ENCODE measurements at regions of chr1 and their contacts with region 1.

Region 1: DNA sequence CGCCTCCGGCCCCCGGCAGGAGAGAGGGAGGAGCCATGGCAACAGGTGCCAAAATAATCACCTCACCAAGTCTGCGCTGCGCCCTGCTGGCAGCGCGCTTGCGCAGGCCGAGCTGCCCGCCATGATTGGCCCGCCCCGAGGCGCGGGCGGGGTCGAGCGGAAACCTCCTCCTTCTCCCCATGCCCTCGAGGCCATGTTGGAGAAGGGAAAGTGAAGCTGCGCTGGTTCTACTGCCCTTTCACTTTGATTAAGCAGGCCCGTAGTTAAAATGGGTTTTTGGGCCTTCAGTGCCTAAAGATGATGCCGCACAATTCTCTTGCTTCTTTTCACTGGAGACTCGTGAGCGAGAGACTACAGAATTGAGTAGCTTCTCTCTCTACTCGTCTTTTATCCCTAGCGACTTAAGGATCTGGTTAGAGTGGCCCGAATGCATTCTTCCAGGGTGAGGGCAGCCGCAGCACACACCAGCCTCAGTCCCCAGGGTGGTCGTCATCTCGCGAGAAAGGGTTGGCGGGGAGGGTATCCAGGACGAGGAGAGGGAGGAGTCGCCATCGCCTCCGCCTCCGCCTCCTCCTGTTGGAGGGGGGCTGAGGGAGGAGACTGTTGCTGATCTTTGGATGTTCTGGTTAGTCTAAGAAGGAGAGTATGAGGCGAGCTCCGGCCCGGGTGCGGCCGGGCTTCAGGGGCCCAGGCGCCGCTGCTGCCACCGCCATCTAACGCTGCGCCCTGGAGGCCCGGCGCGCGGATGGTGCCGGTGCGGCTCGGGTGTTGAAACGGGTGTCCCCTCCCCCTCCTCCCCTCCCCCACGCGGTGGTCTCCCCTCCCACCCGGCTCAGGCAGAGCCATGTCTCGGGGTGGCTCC is at the start of gene DCAF6:
- DNase-seq: peak; percentile 92
- ATAC-seq: peak; percentile 79
- H3K4me3 Mint-ChIP-seq: peak within 1 kb of the TSS; percentile 88
- H3K27ac Mint-ChIP-seq: peak within 1 kb of the TSS; percentile 100
- H3K4me1 Mint-ChIP-seq: peaks cover 35% of the 10 kb centered on the region
- H3K27me3 Mint-ChIP-seq: no peaks in the 10 kb centered on the region
- CTCF ChIP-seq: no peak
- total RNA-seq, gene DCAF6: 23.1 and 32.9 TPM in 2 replicates

Region 2: GRCh38 chr1:166838766-166839599 is 1097.3 kb before region 1 on chr1 and contains the start of gene POGK:
- CTCF ChIA-PET with region 1: interaction called, 3 read pairs
- POLR2A ChIA-PET with region 1: interaction called, 4 read pairs
- intact Hi-C with region 1: loop called (anchors 1 kb)
- DNase-seq: peak; percentile 84
- ATAC-seq: peak; percentile 94
- H3K4me3 Mint-ChIP-seq: peak within 1 kb of the TSS; percentile 92
- H3K27ac Mint-ChIP-seq: peak within 1 kb of the TSS; percentile 96
- H3K4me1 Mint-ChIP-seq: peaks cover 29% of the 10 kb centered on the region
- H3K27me3 Mint-ChIP-seq: peaks cover 2% of the 10 kb centered on the region
- CTCF ChIP-seq: no peak
- total RNA-seq, gene POGK: 37.8 and 39.1 TPM in 2 replicates

Region 3: DNA sequence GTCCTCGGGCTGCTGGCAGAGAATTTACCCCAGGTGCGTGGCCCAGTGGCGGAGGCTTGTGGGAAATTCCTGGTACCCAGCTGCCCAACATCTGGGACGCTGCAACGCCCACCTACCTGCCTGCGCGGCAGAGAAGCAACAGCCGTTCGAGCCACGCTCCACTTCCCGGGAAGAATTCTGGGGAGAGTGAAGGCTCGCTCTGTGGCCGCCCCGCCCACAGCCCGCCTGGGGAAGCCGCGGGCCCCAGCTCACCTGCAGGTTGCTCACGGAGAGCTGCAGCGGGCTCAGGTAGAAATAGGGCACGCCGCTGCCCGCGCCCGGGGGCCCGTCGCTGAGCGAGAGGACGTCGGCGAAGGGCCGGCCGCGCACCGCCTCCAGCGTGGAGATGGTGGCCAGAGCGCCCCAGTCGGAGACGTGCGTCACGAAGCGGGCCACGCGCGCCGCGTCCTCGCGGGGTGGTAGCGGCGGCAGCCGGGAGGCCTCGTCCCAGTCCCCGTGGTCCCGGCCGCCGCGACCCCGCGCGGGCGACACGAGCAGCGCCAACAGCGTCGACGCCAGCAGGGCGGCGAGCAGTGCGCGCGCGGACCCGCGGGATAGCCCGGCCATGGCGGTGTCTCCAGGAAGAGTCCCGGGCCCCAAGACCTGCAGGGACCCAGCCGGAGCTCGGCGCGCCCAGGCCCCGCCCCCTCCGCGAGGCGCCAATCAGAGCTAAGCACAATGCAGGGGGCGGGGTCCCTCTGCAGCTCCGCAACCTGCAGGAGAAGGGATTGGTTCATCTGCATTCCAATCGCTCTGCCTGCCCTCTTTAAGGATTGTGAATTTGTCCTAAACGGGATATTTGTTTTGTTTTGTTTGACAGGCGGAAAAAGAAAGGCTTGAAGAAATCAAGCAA is 382.9 kb before region 1 on chr1 and contains the start of gene CREG1:
- CTCF ChIA-PET with region 1: no interaction called
- POLR2A ChIA-PET with region 1: no interaction called
- intact Hi-C with region 1: loop called (anchors 2 kb)
- DNase-seq: peak; percentile 84
- ATAC-seq: peak; percentile 99
- H3K4me3 Mint-ChIP-seq: peak within 1 kb of the TSS; percentile 86
- H3K27ac Mint-ChIP-seq: peak within 1 kb of the TSS; percentile 41
- H3K4me1 Mint-ChIP-seq: peaks cover 19% of the 10 kb centered on the region
- H3K27me3 Mint-ChIP-seq: no peaks in the 10 kb centered on the region
- CTCF ChIP-seq: no peak
- total RNA-seq, gene CREG1: 3.1 and 3.8 TPM in 2 replicates

Region 4: GRCh38 chr1:167803358-167804207 is 132.7 kb before region 1 on chr1:
- CTCF ChIA-PET with region 1: no interaction called
- POLR2A ChIA-PET with region 1: no interaction called
- intact Hi-C with region 1: loop called (anchors 2 kb)
- DNase-seq: peak; percentile 79
- ATAC-seq: peak; percentile 100
- H3K4me3 Mint-ChIP-seq: peak overlapping the region; percentile 48
- H3K27ac Mint-ChIP-seq: no peak overlapping the region
- H3K4me1 Mint-ChIP-seq: peaks cover 22% of the 10 kb centered on the region
- H3K27me3 Mint-ChIP-seq: no peaks in the 10 kb centered on the region
- CTCF ChIP-seq: peak; percentile 54

Region 5: DNA sequence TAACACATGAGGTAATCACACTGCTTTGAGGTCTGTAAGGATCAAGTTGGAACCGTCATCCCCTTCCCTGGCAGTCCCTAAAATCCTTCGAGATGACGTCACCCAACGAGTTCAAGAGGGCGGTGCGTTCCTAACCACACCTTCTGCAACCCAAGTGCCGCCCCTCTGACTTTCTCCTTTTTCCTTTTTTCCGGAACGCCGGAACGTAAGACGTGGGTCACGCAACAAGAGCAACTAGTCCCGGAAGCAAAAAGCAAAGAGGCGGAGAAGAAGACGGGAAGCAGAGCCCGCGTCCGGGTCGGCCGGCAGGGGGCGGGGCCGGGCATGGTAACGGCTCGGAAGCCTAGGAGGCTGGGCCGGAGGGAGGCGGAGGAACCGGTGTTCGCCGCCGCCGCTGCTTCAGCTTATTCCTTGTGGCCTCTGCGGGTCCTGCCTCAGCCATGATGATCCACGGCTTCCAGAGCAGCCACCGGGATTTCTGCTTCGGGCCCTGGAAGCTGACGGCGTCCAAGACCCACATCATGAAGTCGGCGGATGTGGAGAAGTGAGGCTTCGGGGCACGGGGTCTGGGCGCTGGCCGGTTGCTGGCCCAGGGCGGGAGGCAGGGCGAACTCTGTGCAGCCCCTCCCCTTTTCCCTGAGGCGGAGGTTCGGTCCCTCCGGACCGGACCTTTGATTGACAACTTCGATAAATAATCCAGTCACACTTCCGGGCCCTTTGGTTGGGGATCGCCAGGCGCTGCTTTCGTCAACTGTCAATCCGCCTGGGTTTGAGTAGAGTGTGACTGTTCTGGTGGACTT is 242.5 kb after region 1 on chr1 and contains the start of gene TIPRL:
- CTCF ChIA-PET with region 1: no interaction called
- POLR2A ChIA-PET with region 1: interaction called, 4 read pairs
- intact Hi-C with region 1: loop called (anchors 1 kb)
- DNase-seq: peak; percentile 92
- ATAC-seq: peak; percentile 88
- H3K4me3 Mint-ChIP-seq: no peak within 1 kb of the TSS
- H3K27ac Mint-ChIP-seq: no peak within 1 kb of the TSS
- H3K4me1 Mint-ChIP-seq: peaks cover 2% of the 10 kb centered on the region
- H3K27me3 Mint-ChIP-seq: peaks cover 8% of the 10 kb centered on the region
- CTCF ChIP-seq: no peak
- total RNA-seq, gene TIPRL: 25.5 and 29.8 TPM in 2 replicates

Region 6: GRCh38 chr1:168216171-168216570 is 279.9 kb after region 1 on chr1:
- CTCF ChIA-PET with region 1: no interaction called
- POLR2A ChIA-PET with region 1: no interaction called
- intact Hi-C with region 1: no loop called
- DNase-seq: no peak
- ATAC-seq: no peak
- H3K4me3 Mint-ChIP-seq: no peak overlapping the region
- H3K27ac Mint-ChIP-seq: no peak overlapping the region
- H3K4me1 Mint-ChIP-seq: no peaks in the 10 kb centered on the region
- H3K27me3 Mint-ChIP-seq: no peaks in the 10 kb centered on the region
- CTCF ChIP-seq: no peak

Region 7: GRCh38 chr1:168246506-168246905 is 310.2 kb after region 1 on chr1:
- CTCF ChIA-PET with region 1: no interaction called
- POLR2A ChIA-PET with region 1: no interaction called
- intact Hi-C with region 1: no loop called
- DNase-seq: no peak
- ATAC-seq: no peak
- H3K4me3 Mint-ChIP-seq: no peak overlapping the region
- H3K27ac Mint-ChIP-seq: no peak overlapping the region
- H3K4me1 Mint-ChIP-seq: peaks cover 11% of the 10 kb centered on the region
- H3K27me3 Mint-ChIP-seq: no peaks in the 10 kb centered on the region
- CTCF ChIP-seq: no peak

Region 8: DNA sequence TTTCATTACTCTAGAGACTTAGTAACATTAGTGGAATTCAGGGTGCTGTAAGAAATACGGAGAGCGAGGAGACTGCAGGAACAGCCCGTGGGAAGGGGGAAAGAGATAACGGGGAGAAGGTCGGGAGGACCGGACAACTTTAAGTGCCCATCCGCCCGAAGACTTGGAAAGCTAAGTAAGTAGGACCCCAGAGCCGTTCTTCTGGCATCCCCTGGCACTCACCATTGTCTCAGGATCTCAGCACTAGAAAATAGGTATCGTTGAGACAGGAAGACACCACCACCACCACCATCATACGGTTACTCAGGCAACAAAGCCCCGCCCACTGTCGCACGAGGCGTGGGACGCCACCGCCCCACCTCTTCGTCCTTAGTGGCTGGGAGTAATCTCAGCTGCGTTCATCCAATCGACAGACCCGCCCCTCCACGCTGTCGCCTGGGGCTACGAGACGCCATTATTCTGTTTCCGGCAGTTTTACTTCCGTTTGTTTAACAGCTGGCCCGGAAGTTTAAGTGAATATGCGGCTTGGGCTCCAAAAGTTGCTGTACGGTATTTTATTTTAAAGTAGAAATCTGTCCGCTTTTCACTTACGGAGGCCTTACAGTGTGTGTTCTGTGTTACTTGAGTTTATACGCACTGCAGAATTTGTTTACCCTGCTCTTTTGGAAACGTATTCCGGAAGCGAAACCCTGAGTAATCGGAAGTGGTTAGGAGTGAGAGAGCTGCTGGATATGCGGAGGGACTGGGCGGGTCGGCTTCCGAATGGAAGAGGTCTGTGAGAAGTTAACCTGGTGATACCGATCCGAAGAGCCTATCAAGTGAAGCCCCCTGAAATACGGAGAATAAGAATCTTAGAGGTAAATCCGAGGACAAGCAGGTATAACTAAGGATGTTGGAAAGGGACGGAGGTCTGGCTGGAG is 1431.4 kb after region 1 on chr1 and contains the starts of genes BLZF1 and NME7:
- CTCF ChIA-PET with region 1: no interaction called
- POLR2A ChIA-PET with region 1: interaction called, 3 read pairs
- intact Hi-C with region 1: loop called (anchors 1 kb)
- DNase-seq: peak; percentile 94
- ATAC-seq: peak; percentile 99
- H3K4me3 Mint-ChIP-seq: peak within 1 kb of the TSS; percentile 56
- H3K27ac Mint-ChIP-seq: no peak within 1 kb of the TSS
- H3K4me1 Mint-ChIP-seq: peaks cover 18% of the 10 kb centered on the region
- H3K27me3 Mint-ChIP-seq: no peaks in the 10 kb centered on the region
- CTCF ChIP-seq: no peak
- total RNA-seq, gene BLZF1: 13.8 and 14.3 TPM in 2 replicates
- total RNA-seq, gene NME7: 14.5 and 16.0 TPM in 2 replicates

Measured in activated B cell treated with CpG ODN at 0.5 μM for 24 hours (primary cell).